Gastrocnemius medialis (tissue), 4 donors: ENCODE measurements at regions of chr18 and their contacts with region 1.

Region 1: GRCh38 chr18:8389391-8390340 is 219.6 kb upstream of the RAB12 start:
- DNase-seq: peak; percentile 22 to 55
- ATAC-seq: peak; percentile 66 to 93
- H3K4me3 ChIP-seq: no peak overlapping the region
- H3K27ac ChIP-seq: no peak overlapping the region
- H3K4me1 ChIP-seq: no peaks in the 10 kb centered on the region
- H3K27me3 ChIP-seq: no peaks in the 10 kb centered on the region
- CTCF ChIP-seq: peak; percentile 54 to 79 (median 70)
- POLR2A ChIP-seq: no peak

Region 2: DNA sequence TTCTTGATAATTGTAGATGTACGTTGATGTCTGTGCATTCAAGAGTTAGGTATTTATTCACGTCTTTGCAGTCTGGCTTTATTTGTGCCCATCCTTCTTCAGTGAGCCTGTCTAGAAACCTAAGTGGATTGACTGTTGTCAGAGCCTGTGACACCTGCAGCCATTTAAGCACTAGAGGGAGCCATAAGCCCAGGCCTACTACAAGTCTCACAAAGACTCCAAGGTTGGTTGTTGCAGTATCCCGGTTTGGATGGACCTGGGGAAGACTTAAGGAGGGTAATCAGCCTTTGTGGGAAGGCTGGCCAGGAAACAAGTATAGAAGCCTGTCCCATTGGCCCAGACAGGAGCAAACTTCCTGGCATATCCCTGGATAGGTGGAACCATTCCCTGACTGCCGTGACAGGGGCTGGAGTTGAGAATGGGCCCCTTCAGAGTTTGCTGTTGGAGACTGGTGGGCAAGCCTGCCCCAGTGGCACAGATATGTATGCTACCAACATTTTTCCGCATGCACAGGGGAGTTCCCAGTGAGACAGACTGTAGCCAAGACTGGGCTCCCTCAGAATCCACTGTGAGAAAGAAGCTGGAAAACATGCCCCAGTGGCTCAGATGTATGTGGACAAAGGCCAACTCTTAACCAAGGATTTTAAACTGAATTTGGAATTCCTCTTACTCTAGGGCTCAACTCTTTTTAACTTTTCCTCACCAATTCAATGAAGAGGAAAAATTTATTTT is 1168.1 kb before region 1 on chr18:
- in situ Hi-C with region 1: no loop called
- intact Hi-C with region 1: loop called (anchors 2 kb)
- DNase-seq: peak; percentile 22 to 66
- ATAC-seq: peak; percentile 98 to 100
- H3K4me3 ChIP-seq: no peak overlapping the region
- H3K27ac ChIP-seq: no peak overlapping the region
- H3K4me1 ChIP-seq: peaks cover 3 to 7% of the 10 kb centered on the region in 2 donors
- H3K27me3 ChIP-seq: no peaks in the 10 kb centered on the region
- CTCF ChIP-seq: peak; percentile 58 to 88 (median 80)
- POLR2A ChIP-seq: no peak

Region 3: GRCh38 chr18:7789856-7790552 is 599.7 kb before region 1 on chr18:
- in situ Hi-C with region 1: no loop called
- intact Hi-C with region 1: loop called (anchors 5 kb)
- DNase-seq: no peak
- ATAC-seq: peak in 1 of 2 donors; percentile 66
- H3K4me3 ChIP-seq: no peak overlapping the region
- H3K27ac ChIP-seq: peak overlapping the region in 2 of 4 donors; percentile 26 to 45
- H3K4me1 ChIP-seq: peaks cover 6 to 12% of the 10 kb centered on the region in 2 donors
- H3K27me3 ChIP-seq: no peaks in the 10 kb centered on the region
- CTCF ChIP-seq: peak in 4 of 5 experiments; percentile 22 to 54 (median 44)
- POLR2A ChIP-seq: no peak

Region 4: DNA sequence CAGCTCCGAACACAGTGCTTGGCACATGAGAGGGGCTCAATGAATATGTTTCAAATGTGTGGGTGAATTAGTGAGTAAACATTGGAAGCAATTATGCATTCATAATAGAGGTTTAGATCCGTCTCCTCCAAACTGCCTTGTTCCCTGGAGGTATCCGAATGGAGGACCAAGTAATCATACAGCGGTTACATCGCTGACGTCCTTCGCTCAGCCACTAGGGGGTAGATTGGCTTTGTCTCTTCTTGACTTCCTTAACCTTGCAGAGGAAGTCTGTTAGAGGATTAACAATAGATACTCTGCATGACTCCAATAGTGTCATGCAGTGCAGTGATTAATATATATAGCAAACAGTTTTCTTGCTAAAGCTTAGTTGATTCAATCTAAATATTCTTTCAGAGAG is 305.5 kb before region 1 on chr18:
- in situ Hi-C with region 1: loop called in 1 of 4 experiments (anchors 10 kb)
- intact Hi-C with region 1: no loop called
- DNase-seq: peak in 1 of 2 donors; percentile 22
- ATAC-seq: peak; percentile 57 to 80
- H3K4me3 ChIP-seq: no peak overlapping the region
- H3K27ac ChIP-seq: no peak overlapping the region
- H3K4me1 ChIP-seq: peaks cover 0 to 5% of the 10 kb centered on the region in 2 donors
- H3K27me3 ChIP-seq: no peaks in the 10 kb centered on the region
- CTCF ChIP-seq: peak in 4 of 5 experiments; percentile 12 to 59 (median 45)
- POLR2A ChIP-seq: no peak

Region 5: GRCh38 chr18:8242151-8242696 is 147.4 kb before region 1 on chr18:
- in situ Hi-C with region 1: no loop called
- intact Hi-C with region 1: no loop called
- DNase-seq: no peak
- ATAC-seq: no peak
- H3K4me3 ChIP-seq: no peak overlapping the region
- H3K27ac ChIP-seq: no peak overlapping the region
- H3K4me1 ChIP-seq: no peaks in the 10 kb centered on the region
- H3K27me3 ChIP-seq: no peaks in the 10 kb centered on the region
- CTCF ChIP-seq: no peak
- POLR2A ChIP-seq: no peak

Region 6: DNA sequence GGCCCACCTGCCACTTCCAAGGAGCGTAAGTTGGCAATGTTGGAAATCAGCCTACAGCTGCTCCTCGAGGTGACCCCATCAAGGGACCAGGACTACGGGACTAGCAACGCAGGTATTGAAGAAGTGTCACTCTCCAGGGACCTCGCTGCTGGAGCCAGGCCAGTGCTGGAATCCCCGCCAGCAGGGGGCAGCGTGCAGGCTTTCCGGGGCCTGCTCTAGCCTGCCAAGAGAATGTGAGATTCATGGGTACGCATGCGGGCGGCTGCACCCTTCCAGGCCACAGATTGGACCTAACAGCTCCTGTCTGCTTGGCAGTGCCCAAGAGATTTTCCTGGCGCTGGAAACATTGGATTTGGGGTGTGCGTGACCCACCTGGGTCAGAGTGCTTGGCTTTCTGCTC is 36.7 kb after region 1 on chr18:
- in situ Hi-C with region 1: no loop called
- intact Hi-C with region 1: no loop called
- DNase-seq: no peak
- ATAC-seq: no peak
- H3K4me3 ChIP-seq: no peak overlapping the region
- H3K27ac ChIP-seq: no peak overlapping the region
- H3K4me1 ChIP-seq: no peaks in the 10 kb centered on the region
- H3K27me3 ChIP-seq: no peaks in the 10 kb centered on the region
- CTCF ChIP-seq: no peak
- POLR2A ChIP-seq: no peak